Left cardiac atrium (tissue), 4 donors: ENCODE measurements at regions of chr20 and their contacts with region 1.

Region 1: DNA sequence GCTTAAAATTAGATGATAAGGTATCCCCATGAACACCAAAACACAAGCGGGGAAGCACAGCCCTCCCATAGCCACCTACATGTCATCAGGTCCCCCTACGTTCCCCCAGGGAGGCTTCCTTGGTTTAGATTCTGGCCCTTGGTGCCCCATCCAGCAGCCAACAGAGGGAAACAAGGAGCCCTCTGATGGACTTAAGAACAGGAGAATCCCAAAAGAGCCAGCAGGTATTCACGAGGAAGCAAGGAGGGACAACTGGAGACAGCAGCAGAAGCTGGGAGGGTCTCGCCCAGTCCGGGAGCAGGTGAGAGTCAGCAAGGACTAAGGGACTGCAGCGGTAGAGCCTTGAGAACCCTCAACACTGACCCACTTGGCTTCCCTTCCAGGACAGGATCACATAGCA is 58.4 kb upstream of the TOP1 start:
- DNase-seq: no peak
- ATAC-seq: no peak

Region 2: GRCh38 chr20:40744072-40744817 is 226.0 kb before region 1 on chr20:
- intact Hi-C with region 1: no loop called
- DNase-seq: no peak
- ATAC-seq: no peak

Region 3: DNA sequence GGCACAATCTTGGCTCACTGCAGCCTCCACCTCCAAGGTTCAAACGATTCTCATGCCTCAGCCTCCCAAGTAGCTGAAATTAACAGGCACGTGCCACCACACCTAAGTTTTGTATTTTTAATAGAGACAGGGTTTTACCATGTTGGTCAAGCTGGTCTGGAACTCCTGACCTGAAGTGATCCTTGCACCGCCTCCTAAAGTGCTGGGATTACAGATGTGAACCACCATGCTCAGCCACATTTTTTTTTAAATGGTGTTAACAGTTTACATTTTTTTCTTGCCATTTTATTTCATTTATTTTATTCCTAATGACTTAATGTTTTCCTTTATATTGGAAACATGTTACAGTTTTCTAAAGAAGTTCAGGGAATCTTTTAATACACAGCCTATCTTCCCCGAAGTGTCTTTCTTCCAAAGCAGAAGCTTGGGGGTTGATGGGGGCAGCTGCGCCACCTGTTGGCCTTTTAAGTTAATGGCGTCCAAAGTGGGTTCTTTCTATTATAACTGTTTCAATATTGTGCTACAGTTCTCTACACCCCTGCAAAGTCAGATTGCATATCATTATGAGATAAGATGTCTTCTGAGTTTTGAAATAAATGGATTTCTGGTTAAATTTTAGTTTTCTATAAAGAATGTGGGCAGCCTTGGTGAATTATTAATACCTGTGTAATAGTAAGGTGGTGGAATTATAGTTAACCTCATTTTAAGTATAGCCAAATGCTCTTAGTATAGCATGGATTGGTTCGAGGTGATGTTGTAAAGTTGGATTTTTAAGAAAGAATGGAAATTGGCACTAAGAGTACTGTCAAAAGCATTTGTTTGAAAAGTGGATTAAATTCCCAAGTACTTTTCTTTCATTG is 125.1 kb after region 1 on chr20:
- intact Hi-C with region 1: loop called (anchors 2 to 5 kb)
- DNase-seq: peak; percentile 61
- ATAC-seq: peak in 1 of 2 donors; percentile 74

Region 4: GRCh38 chr20:41161886-41162285 is 191.7 kb after region 1 on chr20:
- intact Hi-C with region 1: no loop called
- DNase-seq: no peak
- ATAC-seq: no peak

Region 5: GRCh38 chr20:41177636-41178035 is 207.4 kb after region 1 on chr20:
- intact Hi-C with region 1: no loop called
- DNase-seq: peak; percentile 60
- ATAC-seq: peak; percentile 41 to 67